ENCODE measurements at regions of chr19 and their contacts with region 1.

Region 1: DNA sequence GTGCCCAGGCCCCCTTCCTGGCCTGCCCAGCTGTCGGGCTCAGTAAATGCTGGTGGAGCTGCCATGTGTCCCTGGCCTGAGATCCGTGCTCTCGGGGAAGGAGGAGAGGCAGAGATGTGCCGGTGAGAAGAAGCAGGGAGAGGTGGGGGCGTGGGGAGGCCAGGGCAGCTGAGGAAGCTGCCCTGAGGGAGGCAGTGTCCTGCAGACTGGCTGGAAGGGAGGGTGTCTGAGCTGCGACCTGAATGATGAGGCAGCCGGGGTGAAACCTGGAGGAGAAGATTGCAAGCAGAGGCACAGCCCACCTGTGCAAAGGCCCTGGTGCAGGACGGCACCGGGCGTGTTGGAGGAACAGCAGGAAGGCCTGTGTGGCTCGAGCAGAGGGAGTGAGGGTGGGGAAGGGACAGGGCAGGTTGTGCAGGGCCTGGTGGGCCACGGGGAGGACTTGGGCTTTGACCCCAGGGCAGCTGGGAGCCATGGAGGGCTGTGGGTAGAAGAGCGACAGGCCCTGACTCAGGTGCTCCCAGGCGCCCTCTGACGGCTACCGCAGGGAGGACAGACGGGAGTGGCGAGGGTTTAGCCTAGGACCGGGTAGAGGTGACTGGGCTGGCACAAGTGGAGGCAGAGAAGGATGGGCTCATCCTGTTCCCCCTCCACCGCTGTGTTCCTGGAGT is 14.0 kb upstream of the CELF5 start:
- H3K4me3 ChIP-seq: no peak overlapping the region
- H3K27ac ChIP-seq: no peak overlapping the region
- H3K4me1 ChIP-seq: no peaks in the 10 kb centered on the region
- CTCF ChIP-seq: peak; percentile 79

Region 2: GRCh38 chr19:3224346-3225168 is 14.1 kb after region 1 on chr19 and contains the start of gene CELF5:
- CTCF ChIA-PET with region 1: interaction called, 12 read pairs
- POLR2A ChIA-PET with region 1: no interaction called
- H3K4me3 ChIP-seq: peak within 1 kb of the TSS; percentile 33
- H3K27ac ChIP-seq: no peak within 1 kb of the TSS
- H3K4me1 ChIP-seq: no peaks in the 10 kb centered on the region
- CTCF ChIP-seq: no peak

Measured in HEK293 (cell line).